ENCODE measurements at regions of chr14 and their contacts with region 1.

Region 1: DNA sequence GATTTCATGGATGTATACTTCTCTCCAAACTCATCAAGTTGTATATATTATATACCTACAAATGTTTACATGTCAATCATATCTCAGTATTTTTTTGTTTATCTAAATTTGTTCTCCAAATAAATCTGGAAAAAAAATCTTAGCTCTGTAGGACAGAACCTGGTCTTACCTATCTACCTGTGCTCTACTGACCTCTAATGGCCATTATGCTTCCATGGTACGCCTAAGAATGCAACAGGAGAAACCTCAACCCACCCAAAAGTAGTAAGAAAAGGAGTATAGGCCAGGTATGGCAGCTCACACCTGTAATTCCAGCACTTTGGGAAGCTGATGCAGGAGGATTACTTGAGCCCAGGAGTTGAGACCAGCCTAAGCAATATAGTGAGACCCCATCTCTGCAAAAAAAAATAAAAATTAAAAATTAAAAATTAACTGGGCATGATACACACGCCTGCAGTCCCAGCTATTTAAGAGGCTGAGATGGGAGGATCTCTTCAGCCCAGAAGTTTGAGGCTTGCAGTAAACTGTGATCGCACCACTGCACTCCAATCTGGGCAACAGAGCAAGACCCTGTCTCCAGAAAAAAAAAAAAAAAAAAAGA is 8.7 kb downstream of the OR11H4 start:
- DNase-seq: no peak
- ATAC-seq: peak; percentile 60
- H3K4me3 ChIP-seq: no peak overlapping the region
- H3K27ac ChIP-seq: no peak overlapping the region
- H3K4me1 ChIP-seq: no peaks in the 10 kb centered on the region
- H3K27me3 ChIP-seq: no peaks in the 10 kb centered on the region
- CTCF ChIP-seq: peak; percentile 16 to 39 (median 28); a peak in 2 of 6 replicates
- EP300 ChIP-seq: no peak
- POLR2A ChIP-seq: no peak
- RAD21 ChIP-seq: peak; percentile 30; the same call in 1 of the 2 replicates

Region 2: DNA sequence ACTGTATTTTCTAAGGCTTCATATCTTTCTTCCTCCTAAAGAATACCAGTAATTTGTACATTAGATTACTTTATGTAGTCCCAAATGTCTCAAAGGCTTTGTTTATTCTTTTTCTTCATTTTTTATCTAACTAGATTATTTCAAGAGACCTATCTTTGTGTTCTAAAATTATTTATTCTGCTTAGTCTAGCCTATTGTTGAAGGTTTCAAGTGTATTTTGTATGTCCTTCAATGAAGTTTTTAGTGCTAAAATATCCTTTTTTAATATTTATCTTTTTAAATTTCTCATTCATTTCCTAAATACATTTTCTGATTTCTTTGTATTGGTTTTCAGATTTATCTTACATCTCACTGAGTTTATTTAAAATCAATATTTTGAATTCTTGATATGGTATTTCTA is 83.3 kb before region 1 on chr14:
- CTCF ChIA-PET with region 1: no interaction called
- POLR2A ChIA-PET with region 1: no interaction called
- RAD21 ChIA-PET with region 1: no interaction called
- SMC1A ChIA-PET with region 1: no interaction called
- in situ Hi-C with region 1: no loop called
- intact Hi-C with region 1: no loop called
- DNase-seq: no peak
- ATAC-seq: no peak
- H3K4me3 ChIP-seq: no peak overlapping the region
- H3K27ac ChIP-seq: no peak overlapping the region
- H3K4me1 ChIP-seq: no peaks in the 10 kb centered on the region
- H3K27me3 ChIP-seq: no peaks in the 10 kb centered on the region
- CTCF ChIP-seq: no peak
- EP300 ChIP-seq: no peak
- POLR2A ChIP-seq: no peak
- RAD21 ChIP-seq: no peak

Region 3: GRCh38 chr14:20204721-20205120 is 43.0 kb before region 1 on chr14:
- CTCF ChIA-PET with region 1: no interaction called
- POLR2A ChIA-PET with region 1: no interaction called
- RAD21 ChIA-PET with region 1: no interaction called
- SMC1A ChIA-PET with region 1: no interaction called
- in situ Hi-C with region 1: loop called (anchors 5 kb)
- intact Hi-C with region 1: no loop called
- DNase-seq: no peak
- ATAC-seq: no peak
- H3K4me3 ChIP-seq: no peak overlapping the region
- H3K27ac ChIP-seq: no peak overlapping the region
- H3K4me1 ChIP-seq: no peaks in the 10 kb centered on the region
- H3K27me3 ChIP-seq: no peaks in the 10 kb centered on the region
- CTCF ChIP-seq: no peak
- EP300 ChIP-seq: no peak
- POLR2A ChIP-seq: no peak
- RAD21 ChIP-seq: no peak

Measured in GM12878 (cell line).